ENCODE measurements at regions of chrX and their contacts with region 1.

Region 1: DNA sequence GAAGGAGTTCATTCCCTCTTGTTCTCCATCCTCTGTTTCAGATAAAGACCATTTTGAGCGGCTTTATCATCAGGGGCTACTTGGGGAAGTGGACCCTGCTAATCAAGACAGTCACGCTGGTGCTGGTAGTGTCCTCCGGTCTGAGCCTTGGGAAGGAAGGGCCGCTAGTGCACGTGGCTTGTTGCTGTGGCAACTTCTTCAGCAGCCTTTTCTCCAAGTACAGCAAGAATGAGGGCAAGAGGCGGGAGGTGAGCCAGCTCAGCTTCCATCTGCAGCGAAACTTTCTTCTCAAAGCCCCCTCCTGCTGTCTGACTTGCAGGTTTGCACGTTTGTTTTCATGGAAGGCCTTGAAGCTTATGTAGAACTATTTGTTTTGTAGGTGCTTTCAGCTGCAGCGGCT is 49.5 kb downstream of the CLCN4 start:
- DNase-seq: no peak
- ATAC-seq: no peak

Region 2: DNA sequence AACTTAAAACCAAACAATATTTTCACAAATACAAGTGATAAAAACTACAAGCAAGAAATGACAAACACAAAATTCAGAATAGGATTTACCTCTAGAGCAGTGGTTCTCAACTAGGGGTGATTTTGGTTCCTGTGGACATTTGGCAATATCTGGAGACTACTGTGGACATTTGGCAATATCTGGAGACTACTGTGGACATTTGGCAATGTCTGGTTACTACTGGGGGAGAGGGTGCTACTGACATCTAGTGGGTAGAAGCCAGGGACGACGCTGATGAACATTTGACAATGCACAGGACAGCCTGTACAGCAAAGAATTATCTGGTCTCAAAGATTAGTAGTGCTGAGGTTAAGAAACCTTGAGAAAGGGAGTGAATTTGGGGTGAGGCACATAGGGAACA is 120.3 kb after region 1 on chrX:
- intact Hi-C with region 1: loop called in 1 of 2 experiments (anchors 5 kb)
- DNase-seq: peak; percentile 25
- ATAC-seq: peak; percentile 47

Measured in left cardiac atrium (tissue), 4 donors.